Heart left ventricle (tissue), 16 donors: ENCODE measurements at regions of chr4 and their contacts with region 1.

Region 1: DNA sequence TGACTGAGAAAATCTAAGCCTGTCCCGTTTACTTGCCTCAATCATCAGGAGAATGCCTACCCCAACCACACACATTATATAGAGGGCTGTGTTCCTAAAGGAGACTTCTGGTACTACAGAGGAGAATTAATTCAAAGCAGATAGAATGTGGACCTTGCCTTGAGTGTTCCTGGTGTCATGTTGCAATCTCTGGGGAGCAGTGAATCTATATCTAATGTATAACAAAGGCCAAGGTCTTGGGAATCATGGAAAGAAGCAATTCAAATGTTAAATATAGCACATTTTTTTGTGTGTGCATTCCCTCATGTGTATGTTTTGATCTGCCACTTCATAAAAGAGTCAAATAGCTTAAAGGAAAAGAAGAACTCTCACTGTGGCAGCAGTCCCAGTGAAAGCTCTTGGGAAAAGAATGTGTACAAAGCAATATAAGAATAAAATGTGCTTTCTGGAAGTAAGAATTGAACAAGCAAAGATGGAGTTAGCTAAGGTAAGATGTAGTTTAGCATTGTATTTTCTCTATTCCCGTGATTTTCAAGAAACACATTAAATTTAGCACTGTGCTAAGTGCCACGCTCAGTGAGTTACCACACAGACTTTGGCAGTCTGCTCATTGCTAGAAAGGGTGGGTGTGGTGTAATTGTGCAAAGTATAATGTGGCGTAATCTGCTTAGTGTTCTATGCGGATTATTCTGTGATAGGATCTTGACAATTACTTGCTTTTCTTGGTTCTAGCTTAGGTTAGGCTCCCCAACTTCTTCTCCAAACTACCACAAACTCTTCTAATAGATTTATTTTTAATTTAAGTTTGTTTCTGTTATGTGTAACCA is 13.7 kb downstream of the ADH6 start:
- DNase-seq: peak in 1 of 5 donors; percentile 27
- ATAC-seq: peak in 2 of 4 donors; percentile 71 to 85
- H3K4me3 ChIP-seq: no peak overlapping the region
- H3K27ac ChIP-seq: no peak overlapping the region
- H3K4me1 ChIP-seq: peaks cover 0 to 11% (median 1%) of the 10 kb centered on the region in 12 donors
- H3K27me3 ChIP-seq: no peaks in the 10 kb centered on the region
- CTCF ChIP-seq: no peak
- POLR2A ChIP-seq: no peak

Region 2: GRCh38 chr4:98976694-98977310 is 228.6 kb before region 1 on chr4:
- intact Hi-C with region 1: no loop called
- DNase-seq: no peak
- ATAC-seq: no peak
- H3K4me3 ChIP-seq: no peak overlapping the region
- H3K27ac ChIP-seq: no peak overlapping the region
- H3K4me1 ChIP-seq: no peaks in the 10 kb centered on the region
- H3K27me3 ChIP-seq: peaks cover 0 to 6% (median 0%) of the 10 kb centered on the region in 9 donors
- CTCF ChIP-seq: no peak
- POLR2A ChIP-seq: no peak

Region 3: GRCh38 chr4:99300934-99301333 is 95.6 kb after region 1 on chr4:
- intact Hi-C with region 1: loop called in 1 of 10 experiments (anchors 10 kb)
- DNase-seq: peak; percentile 76 to 90 (median 82)
- ATAC-seq: peak; percentile 74 to 97 (median 82)
- H3K4me3 ChIP-seq: no peak overlapping the region
- H3K27ac ChIP-seq: peak overlapping the region in 11 of 12 donors; percentile 24 to 72 (median 54)
- H3K4me1 ChIP-seq: peaks cover 0 to 10% (median 0%) of the 10 kb centered on the region in 12 donors
- H3K27me3 ChIP-seq: no peaks in the 10 kb centered on the region
- CTCF ChIP-seq: no peak
- POLR2A ChIP-seq: no peak